Breast epithelium (tissue), 4 donors: ENCODE measurements at regions of chr17 and their contacts with region 1.

Region 1: GRCh38 chr17:57585341-57586195 is 159.5 kb downstream of the CCDC182 start:
- DNase-seq: no peak
- H3K4me3 ChIP-seq: no peak overlapping the region
- H3K27ac ChIP-seq: no peak overlapping the region
- H3K4me1 ChIP-seq: no peaks in the 10 kb centered on the region
- H3K27me3 ChIP-seq: no peaks in the 10 kb centered on the region
- CTCF ChIP-seq: no peak
- POLR2A ChIP-seq: no peak

Region 2: DNA sequence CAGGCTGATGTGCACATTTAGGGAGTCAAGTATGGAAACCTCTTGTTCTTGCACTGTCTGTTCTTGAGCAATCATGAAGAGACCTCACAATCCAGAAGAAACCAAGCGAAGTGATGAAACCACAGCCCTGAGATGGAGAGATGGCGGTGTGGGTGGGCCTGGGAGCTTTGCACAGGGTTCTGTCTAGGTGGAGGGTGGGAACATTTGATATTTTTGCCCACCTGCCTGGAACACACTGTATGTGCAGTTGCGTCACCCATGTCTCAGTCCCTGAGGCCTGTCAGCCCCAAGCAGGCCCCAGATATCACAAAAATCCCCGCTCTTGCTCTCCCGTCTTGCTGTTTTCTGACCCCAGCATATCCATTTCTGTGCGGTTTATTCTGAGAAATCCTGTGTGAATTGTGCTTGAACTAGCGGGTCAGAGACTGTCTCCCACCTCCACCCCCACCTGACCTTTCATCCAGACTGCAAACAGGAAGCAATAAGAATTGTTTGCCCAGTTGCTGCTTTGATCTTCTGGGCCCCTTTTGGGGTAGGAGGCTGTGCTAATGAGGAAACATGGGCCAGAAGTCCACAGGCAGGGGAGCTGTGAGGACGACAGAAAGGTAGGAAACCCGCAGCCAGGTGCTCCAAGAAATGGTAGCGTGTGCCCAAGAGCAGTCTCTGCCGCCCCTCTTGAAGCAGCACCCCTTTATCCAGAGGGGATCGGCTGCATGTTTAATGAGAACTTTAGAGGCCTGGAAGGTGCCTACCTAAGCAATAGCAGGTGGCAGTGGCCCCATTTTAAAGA is 24.3 kb before region 1 on chr17:
- intact Hi-C with region 1: loop called (anchors 1 kb)
- DNase-seq: no peak
- H3K4me3 ChIP-seq: no peak overlapping the region
- H3K27ac ChIP-seq: no peak overlapping the region
- H3K4me1 ChIP-seq: no peaks in the 10 kb centered on the region
- H3K27me3 ChIP-seq: no peaks in the 10 kb centered on the region
- CTCF ChIP-seq: no peak
- POLR2A ChIP-seq: no peak